ENCODE measurements at regions of chr5 and their contacts with region 1.

Region 1: DNA sequence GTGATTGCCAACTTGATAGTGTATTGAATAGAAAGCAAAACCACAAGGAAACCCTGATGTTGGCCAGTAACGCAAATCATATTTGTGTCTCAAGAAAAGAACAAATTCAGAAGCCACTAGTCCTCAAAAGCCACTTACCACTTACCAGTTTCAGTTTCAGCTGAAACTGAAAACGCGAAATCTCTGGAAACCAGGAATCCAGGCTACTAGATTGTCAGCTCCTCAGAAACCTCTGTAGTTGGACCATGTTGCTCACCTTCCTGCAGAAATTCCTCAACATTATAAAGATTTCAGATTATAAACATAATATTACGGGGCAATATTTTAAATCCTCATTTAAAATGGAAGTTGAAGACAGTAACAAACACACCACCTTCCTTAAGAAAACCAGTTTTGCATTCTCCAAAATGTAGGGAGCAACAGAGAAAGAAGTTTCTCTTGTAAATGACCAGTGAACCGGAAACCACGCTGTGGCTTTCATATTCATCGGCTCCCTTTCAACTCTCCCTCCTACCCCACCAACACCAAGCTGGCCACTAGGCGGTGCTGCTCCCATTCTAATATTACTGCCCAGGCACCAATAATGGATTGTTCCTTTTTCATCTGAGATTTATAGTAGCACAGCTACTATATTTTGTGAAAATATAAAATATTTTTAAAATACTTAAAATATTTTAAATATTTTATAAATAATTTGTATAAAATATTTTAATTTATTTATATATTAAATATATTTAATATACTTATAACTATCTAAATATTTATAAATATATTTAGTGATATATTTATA is 8.7 kb upstream of the TMED7 start:
- DNase-seq: no peak
- H3K4me3 ChIP-seq: peak overlapping the region; percentile 43
- CTCF ChIP-seq: peak; percentile 87

Region 2: DNA sequence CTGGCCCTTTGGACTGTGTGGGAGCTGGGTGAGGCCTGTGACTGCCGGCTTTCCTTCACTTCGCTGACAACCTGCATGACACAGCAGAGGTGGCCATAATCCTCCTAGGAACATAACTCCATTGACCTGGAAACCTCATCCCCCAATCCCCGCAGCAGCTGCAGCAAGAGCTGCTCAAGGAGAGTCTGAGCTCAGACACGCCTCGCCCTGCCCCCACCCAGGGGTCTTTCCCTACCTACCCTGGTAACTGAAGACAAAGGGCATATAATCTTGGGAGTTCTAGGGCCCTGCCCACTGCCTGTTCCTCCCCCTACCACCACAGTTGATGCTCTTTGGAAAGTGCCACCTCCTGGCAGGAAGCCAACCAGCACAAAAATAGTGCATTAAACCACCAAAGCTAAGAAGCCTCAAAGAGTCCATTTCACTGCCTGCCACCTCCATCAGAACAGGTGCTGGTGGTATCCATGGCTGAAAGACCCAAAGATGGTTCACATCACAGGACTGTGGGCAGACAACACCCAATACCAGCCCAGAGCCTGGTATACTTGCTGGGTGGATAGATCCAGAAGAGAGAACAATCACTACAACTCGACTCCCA is 483.2 kb before region 1 on chr5:
- CTCF ChIA-PET with region 1: no interaction called
- POLR2A ChIA-PET with region 1: no interaction called
- DNase-seq: no peak
- H3K4me3 ChIP-seq: no peak overlapping the region
- CTCF ChIP-seq: no peak

Region 3: GRCh38 chr5:115770466-115770865 is 135.9 kb after region 1 on chr5:
- CTCF ChIA-PET with region 1: interaction called, 10 read pairs
- POLR2A ChIA-PET with region 1: no interaction called
- DNase-seq: no peak
- H3K4me3 ChIP-seq: no peak overlapping the region
- CTCF ChIP-seq: peak; percentile 44

Measured in AG04449 (cell line).